IMR-90 (cell line): ENCODE measurements at regions of chr4 and their contacts with region 1.

Region 1: GRCh38 chr4:182973511-182973911 is 56.3 kb upstream of the DCTD start:
- DNase-seq: peak; percentile 25
- ATAC-seq: no peak
- H3K4me3 ChIP-seq: no peak overlapping the region
- H3K27ac ChIP-seq: no peak overlapping the region
- H3K4me1 ChIP-seq: peaks cover 7% of the 10 kb centered on the region; the same call in 1 of the 2 replicates
- H3K27me3 ChIP-seq: no peaks in the 10 kb centered on the region
- CTCF ChIP-seq: no peak
- POLR2A ChIP-seq: no peak
- RAD21 ChIP-seq: no peak

Region 2: DNA sequence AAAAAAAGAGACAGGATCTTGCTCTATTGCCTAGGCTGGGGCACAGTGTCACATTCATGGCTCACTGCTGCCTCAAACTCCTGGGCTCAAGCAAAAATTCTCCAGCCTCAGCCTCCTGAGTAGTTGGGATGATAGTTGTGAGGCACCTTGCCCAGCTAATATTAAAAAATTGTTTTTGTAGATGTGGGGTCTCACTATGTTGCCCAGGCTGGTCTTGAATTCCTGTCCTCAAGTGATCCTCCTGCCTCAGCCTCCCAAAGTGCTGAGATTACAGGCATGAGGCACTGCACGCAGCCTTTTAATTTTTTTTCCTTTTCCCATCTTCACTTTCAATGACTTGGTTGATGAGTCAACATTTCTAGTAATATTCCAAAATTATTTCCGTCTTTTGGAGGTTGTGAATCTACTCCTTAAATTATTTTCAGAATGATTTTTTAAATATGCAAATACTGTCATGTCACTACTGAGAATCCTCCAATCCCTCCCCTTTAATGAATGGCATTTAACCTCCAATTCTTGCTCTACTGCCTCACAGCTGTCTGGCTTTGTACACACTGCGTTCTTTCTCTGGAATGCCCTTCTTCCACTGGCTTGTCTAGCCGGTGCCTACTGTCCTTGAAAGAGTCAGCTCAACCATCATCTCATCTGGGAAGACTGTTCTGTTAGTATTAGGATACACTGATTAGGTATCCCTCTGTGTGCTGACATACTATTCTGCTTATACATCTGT is 28.9 kb before region 1 on chr4:
- CTCF ChIA-PET with region 1: no interaction called
- POLR2A ChIA-PET with region 1: no interaction called
- dilution Hi-C with region 1: no loop called
- in situ Hi-C with region 1: no loop called
- intact Hi-C with region 1: loop called (anchors 2 kb)
- DNase-seq: no peak
- ATAC-seq: peak; percentile 72
- H3K4me3 ChIP-seq: no peak overlapping the region
- H3K27ac ChIP-seq: no peak overlapping the region
- H3K4me1 ChIP-seq: no peaks in the 10 kb centered on the region
- H3K27me3 ChIP-seq: peaks cover 12% of the 10 kb centered on the region
- CTCF ChIP-seq: no peak
- POLR2A ChIP-seq: no peak
- RAD21 ChIP-seq: no peak